AG04449 (cell line): ENCODE measurements at regions of chr10 and their contacts with region 1.

Region 1: DNA sequence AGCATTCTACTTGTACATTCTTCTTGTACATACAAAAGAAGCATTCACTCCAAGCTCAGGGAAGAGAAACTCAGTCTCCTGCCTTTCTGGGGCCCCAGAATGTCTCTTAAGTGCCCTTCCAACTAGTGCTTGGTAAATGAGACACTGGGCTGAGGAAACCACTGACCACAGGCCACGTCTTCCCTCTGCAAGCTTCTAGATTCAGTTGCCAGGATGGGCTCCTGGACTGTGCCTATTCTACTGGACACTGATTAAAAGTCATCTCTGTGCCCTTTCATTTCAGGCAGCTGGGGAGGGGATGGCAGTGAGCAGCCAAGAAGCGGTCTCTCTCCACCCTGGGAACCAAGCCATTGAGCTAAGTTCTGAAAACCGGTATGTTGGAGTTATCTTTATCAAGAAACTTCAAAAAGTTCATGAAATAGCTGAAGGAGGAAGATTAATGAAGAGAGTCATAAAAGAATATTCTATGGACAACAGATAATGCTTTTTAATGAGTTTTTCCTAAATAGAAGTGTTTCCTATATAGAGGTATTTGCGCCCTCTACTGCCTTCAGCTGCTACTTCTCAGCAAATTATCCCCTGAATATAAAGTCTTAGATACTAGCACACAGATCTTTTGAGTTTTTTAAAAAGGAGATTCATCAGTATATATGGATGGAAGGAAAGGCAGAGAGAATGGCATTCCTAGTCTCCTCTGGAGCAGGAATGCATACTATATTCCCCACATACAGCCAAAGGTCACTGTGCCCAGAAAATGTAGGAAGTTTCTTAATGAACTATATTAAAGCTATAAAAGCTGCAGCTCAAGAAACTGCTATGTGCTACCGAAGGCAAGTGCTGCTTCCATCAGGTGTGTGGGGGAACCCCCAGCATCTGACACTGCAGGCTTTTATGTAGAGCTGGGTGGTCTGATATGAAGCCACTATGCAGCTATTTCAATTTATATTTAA is 8.4 kb upstream of the IFIT1B start:
- DNase-seq: no peak
- H3K4me3 ChIP-seq: no peak overlapping the region
- CTCF ChIP-seq: peak; percentile 35

Region 2: GRCh38 chr10:89053555-89053954 is 315.9 kb before region 1 on chr10:
- CTCF ChIA-PET with region 1: no interaction called
- POLR2A ChIA-PET with region 1: no interaction called
- DNase-seq: no peak
- H3K4me3 ChIP-seq: no peak overlapping the region
- CTCF ChIP-seq: no peak

Region 3: GRCh38 chr10:89183571-89183970 is 185.9 kb before region 1 on chr10:
- CTCF ChIA-PET with region 1: no interaction called
- POLR2A ChIA-PET with region 1: no interaction called
- DNase-seq: no peak
- H3K4me3 ChIP-seq: no peak overlapping the region
- CTCF ChIP-seq: no peak

Region 4: GRCh38 chr10:89263531-89263930 is 105.9 kb before region 1 on chr10:
- CTCF ChIA-PET with region 1: interaction called, 26 read pairs
- POLR2A ChIA-PET with region 1: no interaction called
- DNase-seq: no peak
- H3K4me3 ChIP-seq: no peak overlapping the region
- CTCF ChIP-seq: no peak

Region 5: GRCh38 chr10:89283936-89284475 is 85.4 kb before region 1 on chr10:
- CTCF ChIA-PET with region 1: interaction called, 30 read pairs
- POLR2A ChIA-PET with region 1: no interaction called
- DNase-seq: no peak
- H3K4me3 ChIP-seq: no peak overlapping the region
- CTCF ChIP-seq: no peak

Region 6: DNA sequence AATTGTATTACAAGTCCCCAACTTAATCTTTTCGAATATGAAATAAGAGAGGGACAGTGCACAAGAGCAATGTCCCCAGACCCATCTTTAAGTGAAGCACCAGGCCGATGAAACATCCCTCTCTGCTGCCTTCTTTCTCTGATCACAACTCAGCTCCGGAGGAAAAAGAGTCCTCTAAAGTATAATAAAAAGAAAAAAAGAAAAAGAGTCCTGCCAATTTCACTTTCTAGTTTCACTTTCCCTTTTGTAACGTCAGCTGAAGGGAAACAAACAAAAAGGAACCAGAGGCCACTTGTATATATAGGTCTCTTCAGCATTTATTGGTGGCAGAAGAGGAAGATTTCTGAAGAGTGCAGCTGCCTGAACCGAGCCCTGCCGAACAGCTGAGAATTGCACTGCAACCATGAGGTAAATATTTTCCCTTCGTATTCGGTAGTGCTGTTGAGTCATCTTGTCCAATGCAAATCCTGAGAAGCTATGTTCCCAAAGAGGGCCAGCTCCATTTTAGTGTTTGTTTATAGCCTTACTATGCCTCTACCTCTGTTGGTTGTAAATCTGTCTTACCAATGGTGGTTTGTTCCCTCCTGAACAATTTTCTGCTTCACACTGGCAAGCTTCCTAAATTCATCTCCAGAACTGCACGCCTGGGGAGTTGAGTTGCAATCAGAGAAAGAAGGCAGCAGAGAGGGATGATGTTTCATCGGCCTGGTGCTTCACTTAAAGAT is 67.5 kb before region 1 on chr10 and contains the start of gene IFIT2:
- CTCF ChIA-PET with region 1: interaction called, 15 read pairs
- POLR2A ChIA-PET with region 1: no interaction called
- DNase-seq: no peak
- H3K4me3 ChIP-seq: peak within 1 kb of the TSS; percentile 55
- CTCF ChIP-seq: no peak

Region 7: GRCh38 chr10:89384474-89385340 is 15.3 kb after region 1 on chr10:
- CTCF ChIA-PET with region 1: interaction called, 63 read pairs
- POLR2A ChIA-PET with region 1: no interaction called
- DNase-seq: no peak
- H3K4me3 ChIP-seq: no peak overlapping the region
- CTCF ChIP-seq: no peak

Region 8: GRCh38 chr10:89404104-89405047 is 34.9 kb after region 1 on chr10:
- CTCF ChIA-PET with region 1: interaction called, 12 read pairs
- POLR2A ChIA-PET with region 1: no interaction called
- DNase-seq: no peak
- H3K4me3 ChIP-seq: no peak overlapping the region
- CTCF ChIP-seq: no peak

Region 9: DNA sequence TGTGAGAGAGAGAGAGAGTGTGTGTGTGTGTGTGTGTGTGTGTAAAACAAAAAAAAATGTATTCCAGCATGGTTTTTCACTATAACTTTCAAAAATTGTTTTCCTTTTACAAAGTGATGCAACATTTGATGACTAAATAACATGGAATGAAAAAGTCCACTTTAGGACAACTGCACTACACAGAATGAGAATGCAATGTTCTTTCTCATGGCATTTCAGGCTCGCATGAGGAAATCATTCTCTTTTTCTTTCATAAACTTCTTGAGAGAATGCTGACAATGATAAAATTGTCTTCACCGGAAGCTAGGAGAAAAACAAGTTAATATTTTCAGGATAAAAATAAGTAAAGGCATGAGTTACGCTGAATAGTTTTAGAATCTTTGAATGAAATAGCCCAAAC is 112.2 kb after region 1 on chr10:
- CTCF ChIA-PET with region 1: no interaction called
- POLR2A ChIA-PET with region 1: no interaction called
- DNase-seq: peak; percentile 84
- H3K4me3 ChIP-seq: no peak overlapping the region
- CTCF ChIP-seq: no peak